CD8-positive, alpha-beta T cell (primary cell): ENCODE measurements at regions of chr2 and their contacts with region 1.

Region 1: GRCh38 chr2:113173542-113174395 is at the start of gene PSD4:
- DNase-seq: peak; percentile 70 to 95 (median 89)
- ATAC-seq: peak; percentile 75
- H3K4me3 ChIP-seq: peak within 1 kb of the TSS; percentile 73 to 91
- H3K4me3 Mint-ChIP-seq: peak within 1 kb of the TSS; percentile 87
- H3K27ac ChIP-seq: peak within 1 kb of the TSS; percentile 77 to 82
- H3K27ac Mint-ChIP-seq: peak within 1 kb of the TSS; percentile 95
- H3K4me1 ChIP-seq: peaks cover 76% of the 10 kb centered on the region
- H3K4me1 Mint-ChIP-seq: peaks cover 82% of the 10 kb centered on the region
- H3K27me3 ChIP-seq: no peaks in the 10 kb centered on the region
- H3K27me3 Mint-ChIP-seq: no peaks in the 10 kb centered on the region
- CTCF ChIP-seq: no peak
- total RNA-seq, gene PSD4: 80.6 to 86.2 TPM

Region 2: DNA sequence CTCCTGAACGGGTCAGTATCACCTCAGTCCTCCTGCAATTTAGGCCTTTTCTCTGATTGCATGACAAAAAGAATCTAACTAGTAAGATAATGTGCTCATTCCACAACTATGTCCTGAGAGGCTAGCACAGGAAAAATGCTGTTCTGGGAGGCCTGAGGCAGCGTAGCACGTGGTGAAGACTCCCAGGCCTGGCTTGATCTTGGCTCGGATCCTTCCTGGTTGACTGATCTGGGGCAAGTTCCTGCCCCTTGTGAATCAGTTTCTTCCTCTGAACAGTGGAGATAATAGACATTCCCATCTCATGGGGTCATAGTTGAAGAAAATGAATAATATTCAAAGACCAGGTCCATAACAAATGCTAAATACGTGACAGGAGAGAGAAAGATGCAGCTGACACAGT is 1023.3 kb before region 1 on chr2:
- CTCF ChIA-PET with region 1: no interaction called
- POLR2A ChIA-PET with region 1: no interaction called
- intact Hi-C with region 1: no loop called
- DNase-seq: peak in 1 of 9 experiments; percentile 7
- ATAC-seq: no peak
- H3K4me3 ChIP-seq: no peak overlapping the region
- H3K4me3 Mint-ChIP-seq: no peak overlapping the region
- H3K27ac ChIP-seq: no peak overlapping the region
- H3K27ac Mint-ChIP-seq: no peak overlapping the region
- H3K4me1 ChIP-seq: peaks cover 11% of the 10 kb centered on the region
- H3K4me1 Mint-ChIP-seq: peaks cover 10% of the 10 kb centered on the region
- H3K27me3 ChIP-seq: no peaks in the 10 kb centered on the region
- H3K27me3 Mint-ChIP-seq: peaks cover 2% of the 10 kb centered on the region
- CTCF ChIP-seq: no peak

Region 3: GRCh38 chr2:112187805-112188596 is 985.8 kb before region 1 on chr2:
- CTCF ChIA-PET with region 1: no interaction called
- POLR2A ChIA-PET with region 1: no interaction called
- intact Hi-C with region 1: loop called in 1 of 2 experiments (anchors 10 kb)
- DNase-seq: peak; percentile 30 to 85 (median 77)
- ATAC-seq: peak; percentile 82
- H3K4me3 ChIP-seq: peak overlapping the region; percentile 16 to 23
- H3K4me3 Mint-ChIP-seq: peak overlapping the region; percentile 59
- H3K27ac ChIP-seq: peak overlapping the region; percentile 72 to 94
- H3K27ac Mint-ChIP-seq: peak overlapping the region; percentile 100
- H3K4me1 ChIP-seq: peaks cover 31% of the 10 kb centered on the region
- H3K4me1 Mint-ChIP-seq: peaks cover 63% of the 10 kb centered on the region
- H3K27me3 ChIP-seq: no peaks in the 10 kb centered on the region
- H3K27me3 Mint-ChIP-seq: no peaks in the 10 kb centered on the region
- CTCF ChIP-seq: no peak

Region 4: DNA sequence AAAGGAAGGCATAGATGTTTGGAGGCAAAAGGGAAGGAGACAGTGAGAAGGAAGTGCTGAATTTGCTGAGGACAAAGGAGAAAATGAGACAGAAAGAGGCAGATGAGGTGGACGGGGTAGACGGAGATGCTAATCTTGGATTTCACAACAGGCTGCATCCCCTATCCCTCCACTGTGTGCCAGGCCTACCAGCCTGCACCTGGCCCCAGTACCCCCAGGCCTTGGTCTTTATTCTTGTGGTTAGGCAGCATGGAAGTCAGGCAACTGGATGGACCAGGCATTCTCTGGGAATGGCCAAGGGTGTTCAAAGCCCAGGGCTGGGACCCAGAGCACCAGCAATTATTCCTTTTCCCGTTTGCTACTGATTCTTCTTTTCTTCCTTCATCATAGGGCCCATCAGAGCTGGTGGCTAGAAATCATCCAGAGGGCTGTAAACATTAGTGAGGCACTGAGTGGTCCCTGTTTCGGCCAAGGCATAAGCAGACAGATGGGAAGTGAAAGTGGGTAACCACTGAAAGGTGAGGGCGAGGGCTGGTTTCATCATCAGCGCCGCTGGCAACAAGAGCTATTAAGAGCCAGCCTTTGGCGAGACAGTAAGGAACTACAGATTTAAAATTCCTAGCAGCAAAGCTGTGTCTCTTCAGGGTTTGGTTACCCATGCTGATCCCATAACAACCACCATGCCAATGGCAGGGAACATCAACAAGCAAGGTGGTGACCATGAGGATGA is 537.4 kb before region 1 on chr2:
- CTCF ChIA-PET with region 1: no interaction called
- POLR2A ChIA-PET with region 1: no interaction called
- intact Hi-C with region 1: loop called in 1 of 2 experiments (anchors 10 kb)
- DNase-seq: peak in 1 of 9 experiments; percentile 53
- ATAC-seq: no peak
- H3K4me3 ChIP-seq: no peak overlapping the region
- H3K4me3 Mint-ChIP-seq: no peak overlapping the region
- H3K27ac ChIP-seq: peak overlapping the region in 1 of 2 experiments; percentile 34
- H3K27ac Mint-ChIP-seq: peak overlapping the region; percentile 88
- H3K4me1 ChIP-seq: peaks cover 58% of the 10 kb centered on the region
- H3K4me1 Mint-ChIP-seq: peaks cover 62% of the 10 kb centered on the region
- H3K27me3 ChIP-seq: no peaks in the 10 kb centered on the region
- H3K27me3 Mint-ChIP-seq: no peaks in the 10 kb centered on the region
- CTCF ChIP-seq: no peak

Region 5: DNA sequence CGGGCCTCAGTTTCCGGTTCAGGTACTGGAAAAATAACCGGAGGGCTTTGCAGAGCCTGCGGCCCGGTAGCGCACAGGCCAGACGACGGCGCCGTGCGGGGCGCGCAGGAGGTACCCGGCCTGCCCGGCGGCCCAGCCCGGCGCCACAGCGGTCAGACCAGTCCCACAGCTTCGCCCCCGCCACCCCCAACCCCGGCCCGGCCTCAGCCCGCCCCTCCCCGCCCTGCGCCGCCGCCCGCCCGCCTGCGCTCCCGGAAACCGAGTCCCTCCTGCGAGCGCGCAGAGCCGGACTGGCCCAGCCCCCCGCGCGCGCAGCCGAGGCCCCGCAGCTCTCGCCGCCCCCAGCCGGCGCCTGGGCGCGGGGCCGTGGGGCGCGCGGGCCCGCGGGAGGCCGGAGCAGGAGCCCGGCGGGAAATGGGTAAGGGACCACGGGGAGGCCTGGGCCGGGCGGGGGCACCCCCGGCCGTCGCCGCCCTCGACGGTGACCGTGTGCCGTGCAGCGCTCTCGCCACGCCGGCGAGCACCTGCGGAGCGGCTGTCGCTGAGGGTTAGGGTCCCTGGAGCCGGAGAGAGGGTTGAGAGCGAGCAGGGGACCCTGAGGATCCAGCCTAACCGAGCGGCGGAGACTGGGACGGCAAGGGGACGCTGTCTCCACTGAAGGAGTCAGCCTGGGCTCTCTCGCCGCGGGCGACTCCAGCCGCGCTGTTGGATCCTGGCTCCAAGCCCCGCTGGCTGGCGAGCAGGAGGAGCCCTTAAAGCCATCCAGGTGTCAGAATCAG is 16.5 kb before region 1 on chr2:
- CTCF ChIA-PET with region 1: interaction called, 18 read pairs
- POLR2A ChIA-PET with region 1: interaction called, 59 read pairs
- intact Hi-C with region 1: loop called (anchors 1 to 2 kb)
- DNase-seq: peak in 7 of 9 experiments; percentile 34 to 75 (median 51)
- ATAC-seq: peak; percentile 83
- H3K4me3 ChIP-seq: peak overlapping the region; percentile 63 to 76
- H3K4me3 Mint-ChIP-seq: peak overlapping the region; percentile 91
- H3K27ac ChIP-seq: peak overlapping the region; percentile 21 to 55
- H3K27ac Mint-ChIP-seq: peak overlapping the region; percentile 91
- H3K4me1 ChIP-seq: peaks cover 20% of the 10 kb centered on the region
- H3K4me1 Mint-ChIP-seq: peaks cover 26% of the 10 kb centered on the region
- H3K27me3 ChIP-seq: no peaks in the 10 kb centered on the region
- H3K27me3 Mint-ChIP-seq: no peaks in the 10 kb centered on the region
- CTCF ChIP-seq: no peak

Region 6: GRCh38 chr2:113192438-113193100 is 18.8 kb after region 1 on chr2:
- CTCF ChIA-PET with region 1: interaction called, 95 read pairs
- POLR2A ChIA-PET with region 1: interaction called, 7 read pairs
- intact Hi-C with region 1: no loop called
- DNase-seq: no peak
- ATAC-seq: no peak
- H3K4me3 ChIP-seq: no peak overlapping the region
- H3K4me3 Mint-ChIP-seq: no peak overlapping the region
- H3K27ac ChIP-seq: no peak overlapping the region
- H3K27ac Mint-ChIP-seq: peak overlapping the region; percentile 76
- H3K4me1 ChIP-seq: peaks cover 10% of the 10 kb centered on the region
- H3K4me1 Mint-ChIP-seq: peaks cover 52% of the 10 kb centered on the region
- H3K27me3 ChIP-seq: no peaks in the 10 kb centered on the region
- H3K27me3 Mint-ChIP-seq: no peaks in the 10 kb centered on the region
- CTCF ChIP-seq: no peak

Region 7: DNA sequence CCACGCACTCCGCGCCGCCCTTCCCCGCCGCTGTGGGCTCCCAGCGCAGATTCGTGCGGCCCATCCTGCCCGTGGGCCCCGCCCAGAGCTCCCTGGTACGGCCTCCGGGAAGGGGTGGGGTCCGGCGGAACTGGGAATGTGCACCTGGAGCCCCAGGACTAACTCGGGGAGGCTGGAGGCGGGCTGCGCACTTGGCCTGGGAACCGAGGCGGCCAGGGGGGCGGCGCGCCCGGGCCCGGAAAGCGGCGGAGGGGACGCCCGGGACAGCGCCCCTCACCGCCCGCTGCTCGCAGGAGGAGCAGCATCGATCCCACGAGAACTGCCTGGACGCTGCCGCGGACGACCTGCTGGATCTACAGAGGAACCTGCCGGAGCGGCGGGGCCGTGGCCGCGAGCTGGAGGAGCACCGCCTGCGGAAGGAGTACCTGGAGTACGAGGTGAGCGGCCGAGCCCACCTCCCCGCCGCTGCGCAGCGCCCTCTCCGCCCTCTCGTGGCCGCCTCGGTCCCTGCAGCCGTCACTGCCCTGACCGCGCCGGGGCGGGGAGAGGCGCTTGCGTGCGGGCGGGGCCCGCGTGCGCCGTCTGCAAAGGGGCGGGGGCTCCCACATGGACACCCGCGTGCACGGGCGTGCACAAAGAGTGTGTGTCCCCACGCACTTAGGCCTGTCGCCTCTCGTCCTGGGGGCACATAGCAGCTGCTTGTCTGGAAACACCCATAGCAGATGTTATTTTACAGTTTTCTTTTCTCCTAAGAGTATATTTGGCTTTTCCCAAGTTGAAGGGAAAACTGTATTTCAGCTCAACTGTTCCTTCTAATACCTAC is 25.2 kb after region 1 on chr2:
- CTCF ChIA-PET with region 1: interaction called, 95 read pairs
- POLR2A ChIA-PET with region 1: interaction called, 8 read pairs
- intact Hi-C with region 1: loop called (anchors 2 kb)
- DNase-seq: peak; percentile 48 to 84 (median 73)
- ATAC-seq: peak; percentile 77
- H3K4me3 ChIP-seq: no peak overlapping the region
- H3K4me3 Mint-ChIP-seq: no peak overlapping the region
- H3K27ac ChIP-seq: no peak overlapping the region
- H3K27ac Mint-ChIP-seq: no peak overlapping the region
- H3K4me1 ChIP-seq: peaks cover 7% of the 10 kb centered on the region
- H3K4me1 Mint-ChIP-seq: peaks cover 24% of the 10 kb centered on the region
- H3K27me3 ChIP-seq: no peaks in the 10 kb centered on the region
- H3K27me3 Mint-ChIP-seq: no peaks in the 10 kb centered on the region
- CTCF ChIP-seq: peak; percentile 76

Region 8: GRCh38 chr2:113876503-113877387 is 703.0 kb after region 1 on chr2:
- CTCF ChIA-PET with region 1: no interaction called
- POLR2A ChIA-PET with region 1: no interaction called
- intact Hi-C with region 1: loop called in 1 of 2 experiments (anchors 10 kb)
- DNase-seq: peak; percentile 32 to 81 (median 71)
- ATAC-seq: peak; percentile 89
- H3K4me3 ChIP-seq: no peak overlapping the region
- H3K4me3 Mint-ChIP-seq: peak overlapping the region; percentile 29
- H3K27ac ChIP-seq: peak overlapping the region; percentile 6 to 49
- H3K27ac Mint-ChIP-seq: peak overlapping the region; percentile 86
- H3K4me1 ChIP-seq: peaks cover 26% of the 10 kb centered on the region
- H3K4me1 Mint-ChIP-seq: peaks cover 42% of the 10 kb centered on the region
- H3K27me3 ChIP-seq: no peaks in the 10 kb centered on the region
- H3K27me3 Mint-ChIP-seq: no peaks in the 10 kb centered on the region
- CTCF ChIP-seq: no peak